ENCODE measurements at regions of chr11 and their contacts with region 1.

Region 1: GRCh38 chr11:113974741-113975470 is at the start of gene HTR3A:
- DNase-seq: peak; percentile 30 to 73
- ATAC-seq: peak; percentile 66 to 90 (median 86)
- H3K4me3 ChIP-seq: no peak within 1 kb of the TSS
- H3K27ac ChIP-seq: no peak within 1 kb of the TSS
- H3K4me1 ChIP-seq: peaks cover 8% of the 10 kb centered on the region
- H3K27me3 ChIP-seq: peaks cover 0 to 6% (median 6%) of the 10 kb centered on the region in 3 donors
- CTCF ChIP-seq: no peak
- total RNA-seq, gene HTR3A: not detected

Region 2: DNA sequence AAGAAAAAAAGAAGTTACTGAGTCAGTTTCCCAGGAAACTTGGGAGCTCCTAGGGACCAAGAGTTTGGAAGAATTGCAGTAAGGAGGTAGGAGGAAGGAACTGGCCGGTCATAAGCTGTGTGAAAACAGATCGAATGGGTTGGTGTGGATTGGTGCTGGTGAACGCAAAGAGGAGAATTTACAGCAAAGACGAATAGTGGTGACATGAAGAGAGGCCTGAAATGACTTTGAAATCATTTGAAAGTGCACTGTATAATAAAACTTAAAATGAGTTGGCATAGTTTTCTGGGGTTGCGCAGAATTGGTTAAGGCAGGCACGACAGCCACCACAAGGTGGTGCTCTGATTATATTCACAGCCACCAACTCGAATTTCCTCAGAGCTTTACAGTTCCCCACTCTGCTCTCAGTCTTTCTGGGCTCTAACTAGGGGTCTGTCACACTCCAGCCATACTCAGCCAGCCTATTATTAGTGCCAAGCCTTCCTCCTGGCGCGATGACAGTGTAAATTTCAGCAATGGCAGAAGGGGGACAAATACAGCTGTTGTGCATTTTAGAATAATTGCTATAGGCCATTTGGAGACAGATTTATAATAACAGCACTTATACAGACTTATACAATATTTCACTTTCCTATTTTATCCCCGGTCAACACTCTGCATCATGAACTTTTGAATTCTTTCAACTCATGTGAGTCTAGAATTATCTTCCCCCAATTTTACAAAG is 78.6 kb before region 1 on chr11:
- intact Hi-C with region 1: loop called in 1 of 2 experiments (anchors 5 kb)
- DNase-seq: no peak
- ATAC-seq: peak; percentile 77 to 91 (median 82)
- H3K4me3 ChIP-seq: no peak overlapping the region
- H3K27ac ChIP-seq: peak overlapping the region; percentile 43
- H3K4me1 ChIP-seq: peaks cover 11% of the 10 kb centered on the region
- H3K27me3 ChIP-seq: no peaks in the 10 kb centered on the region
- CTCF ChIP-seq: peak; percentile 72

Measured in psoas muscle (tissue), 8 donors.